AG04450 (cell line): ENCODE measurements at regions of chr2 and their contacts with region 1.

Region 1: DNA sequence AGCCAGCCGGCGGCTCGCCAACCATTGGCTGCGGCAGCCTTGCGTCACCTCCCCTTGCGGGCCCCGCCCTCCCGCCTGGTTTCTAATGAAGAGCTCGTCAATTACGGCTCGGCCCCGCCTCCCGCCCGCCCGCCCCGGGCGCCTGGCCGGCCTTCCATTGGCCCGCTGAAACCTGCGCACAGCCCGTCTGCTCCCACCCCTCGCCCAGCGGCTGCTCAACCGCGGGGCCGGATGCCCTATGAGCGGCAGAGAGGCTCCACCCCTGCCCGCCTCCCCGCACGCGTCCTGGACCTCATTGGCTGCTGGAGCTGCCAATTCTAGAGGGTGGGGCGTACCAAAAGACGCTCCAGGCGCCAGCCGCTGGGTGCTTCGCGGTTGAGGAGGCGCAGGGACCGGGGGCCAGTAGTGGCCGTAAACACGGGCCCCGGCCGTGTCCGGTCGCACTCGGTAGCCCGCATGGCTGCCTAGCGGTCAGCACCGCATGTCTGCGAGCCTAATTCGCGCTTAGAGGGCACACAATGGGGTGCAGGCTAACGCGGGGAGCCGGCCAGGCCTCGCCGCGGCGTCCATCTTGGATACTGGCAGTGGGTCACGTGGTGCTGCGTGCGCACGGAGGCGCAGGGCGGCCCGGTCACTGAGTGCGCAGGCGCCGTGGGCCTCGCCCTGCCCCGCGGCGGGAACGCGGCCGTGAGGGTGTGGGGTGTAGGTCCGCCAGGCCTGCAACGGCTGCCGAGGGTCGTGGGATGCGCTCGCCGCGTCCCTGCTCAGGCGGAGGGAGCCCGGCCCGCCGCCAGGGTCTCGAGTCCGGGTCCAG is 454 bp upstream of the HDAC4 start:
- DNase-seq: peak; percentile 98
- H3K4me3 ChIP-seq: peak overlapping the region; percentile 98
- H3K27ac ChIP-seq: peak overlapping the region; percentile 99
- H3K27me3 ChIP-seq: no peaks in the 10 kb centered on the region
- CTCF ChIP-seq: no peak

Region 2: GRCh38 chr2:239326831-239327535 is 74.3 kb before region 1 on chr2:
- CTCF ChIA-PET with region 1: no interaction called
- POLR2A ChIA-PET with region 1: interaction called, 20 read pairs
- DNase-seq: no peak
- H3K4me3 ChIP-seq: no peak overlapping the region
- H3K27ac ChIP-seq: peak overlapping the region; percentile 97
- H3K27me3 ChIP-seq: no peaks in the 10 kb centered on the region
- CTCF ChIP-seq: no peak

Region 3: DNA sequence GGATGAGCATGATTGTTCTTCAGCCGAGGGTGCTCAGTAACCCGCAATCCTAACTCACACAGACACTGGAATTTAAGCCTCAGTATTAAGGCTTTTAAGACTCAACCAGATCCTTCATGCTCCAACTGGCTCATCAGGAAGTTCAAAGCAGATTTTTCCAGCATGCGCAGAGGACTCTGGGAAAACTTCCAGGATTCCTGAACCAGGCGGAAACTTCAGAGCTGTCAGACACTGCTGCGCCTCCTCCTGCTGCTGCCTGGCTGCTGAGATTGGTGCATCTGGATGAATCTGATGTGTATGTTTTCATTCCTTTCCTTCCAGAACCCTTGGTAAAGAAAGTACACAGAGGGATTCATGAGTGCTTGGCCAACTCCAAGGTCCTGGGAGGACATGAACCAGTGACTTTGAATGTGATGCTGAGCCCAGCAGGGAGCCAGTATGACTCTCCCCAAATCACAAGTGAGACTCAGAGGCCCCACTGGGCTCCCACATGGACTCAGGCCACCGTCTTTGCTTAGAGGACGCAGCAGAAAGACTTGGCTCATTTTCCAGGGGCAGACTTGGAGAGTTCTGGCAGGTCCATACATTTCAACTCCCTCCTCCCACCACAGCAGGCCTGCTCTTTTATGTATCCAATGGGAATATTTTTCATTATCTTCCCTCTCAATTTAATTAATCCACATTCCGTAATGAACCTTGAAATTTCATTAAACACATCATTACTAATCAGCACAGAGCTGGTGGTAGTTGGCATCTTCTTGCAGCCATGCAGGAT is 143.1 kb after region 1 on chr2:
- CTCF ChIA-PET with region 1: no interaction called
- POLR2A ChIA-PET with region 1: no interaction called
- DNase-seq: no peak
- H3K4me3 ChIP-seq: no peak overlapping the region
- H3K27ac ChIP-seq: no peak overlapping the region
- H3K27me3 ChIP-seq: no peaks in the 10 kb centered on the region
- CTCF ChIP-seq: no peak